Activated CD8-positive, alpha-beta memory T cell treated with anti-CD3 and anti-CD28 coated beads, Interleukin-2, amount 10 ng/mL, durations not matched to agents 7 days and 5 days (primary cell): ENCODE measurements at regions of chr6 and their contacts with region 1.

Region 1: DNA sequence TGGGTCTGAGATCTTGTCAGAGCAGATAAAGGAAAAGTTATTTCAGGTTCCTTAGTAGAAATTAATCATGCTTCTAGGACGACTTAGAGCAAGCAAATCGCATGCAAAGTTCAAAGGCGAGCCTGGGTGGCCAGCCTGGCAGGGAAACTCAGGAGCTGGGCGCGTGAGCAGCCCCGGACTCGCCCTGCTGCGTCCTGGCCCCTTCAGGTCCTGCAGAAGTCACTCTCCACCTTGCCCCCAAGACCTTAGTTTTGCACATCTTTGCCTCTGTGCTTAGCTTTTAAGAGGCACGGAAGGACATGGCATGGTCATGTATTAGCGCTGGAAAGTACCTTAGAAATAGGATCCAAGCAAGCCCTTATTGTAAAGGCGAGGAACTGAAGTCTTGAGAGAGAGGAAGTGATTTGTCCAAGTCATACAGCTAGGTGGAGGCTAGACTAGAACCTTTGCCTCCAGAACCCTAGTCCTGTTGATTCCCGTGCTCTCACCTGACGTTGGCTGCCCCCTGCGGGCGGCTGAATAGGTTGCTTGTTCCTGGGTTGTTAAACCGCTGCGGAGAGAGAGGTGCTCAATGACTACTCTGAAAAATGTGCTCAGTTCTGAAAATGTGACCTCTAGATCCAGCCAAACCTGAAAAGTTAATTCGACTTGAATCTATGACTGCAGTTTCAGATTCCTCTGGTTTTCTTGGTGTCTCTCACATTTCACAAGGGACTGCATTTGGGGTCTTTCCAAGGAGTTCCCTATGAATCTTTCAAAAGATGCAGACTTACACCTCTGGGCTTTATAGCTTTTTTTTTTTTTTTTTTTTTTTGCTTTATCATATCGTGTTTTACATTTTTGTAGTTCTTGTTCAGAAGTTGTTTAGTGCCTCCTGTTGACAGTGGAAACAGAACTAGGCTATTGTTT is 2.7 kb downstream of the MYB start:
- DNase-seq: peak; percentile 92
- ATAC-seq: peak; percentile 45
- H3K4me3 Mint-ChIP-seq: peak overlapping the region; percentile 97
- H3K27ac Mint-ChIP-seq: peak overlapping the region; percentile 92
- H3K4me1 Mint-ChIP-seq: peaks cover 32% of the 10 kb centered on the region
- H3K27me3 Mint-ChIP-seq: no peaks in the 10 kb centered on the region

Region 2: GRCh38 chr6:135075018-135075417 is 108.8 kb before region 1 on chr6:
- CTCF ChIA-PET with region 1: no interaction called
- DNase-seq: no peak
- ATAC-seq: no peak
- H3K4me3 Mint-ChIP-seq: no peak overlapping the region
- H3K27ac Mint-ChIP-seq: no peak overlapping the region
- H3K4me1 Mint-ChIP-seq: peaks cover 8% of the 10 kb centered on the region
- H3K27me3 Mint-ChIP-seq: no peaks in the 10 kb centered on the region

Region 3: GRCh38 chr6:135088818-135089809 is 94.7 kb before region 1 on chr6:
- CTCF ChIA-PET with region 1: interaction called, 12 read pairs
- DNase-seq: peak; percentile 79
- ATAC-seq: peak; percentile 87
- H3K4me3 Mint-ChIP-seq: peak overlapping the region; percentile 71
- H3K27ac Mint-ChIP-seq: peak overlapping the region; percentile 89
- H3K4me1 Mint-ChIP-seq: peaks cover 84% of the 10 kb centered on the region
- H3K27me3 Mint-ChIP-seq: no peaks in the 10 kb centered on the region

Region 4: DNA sequence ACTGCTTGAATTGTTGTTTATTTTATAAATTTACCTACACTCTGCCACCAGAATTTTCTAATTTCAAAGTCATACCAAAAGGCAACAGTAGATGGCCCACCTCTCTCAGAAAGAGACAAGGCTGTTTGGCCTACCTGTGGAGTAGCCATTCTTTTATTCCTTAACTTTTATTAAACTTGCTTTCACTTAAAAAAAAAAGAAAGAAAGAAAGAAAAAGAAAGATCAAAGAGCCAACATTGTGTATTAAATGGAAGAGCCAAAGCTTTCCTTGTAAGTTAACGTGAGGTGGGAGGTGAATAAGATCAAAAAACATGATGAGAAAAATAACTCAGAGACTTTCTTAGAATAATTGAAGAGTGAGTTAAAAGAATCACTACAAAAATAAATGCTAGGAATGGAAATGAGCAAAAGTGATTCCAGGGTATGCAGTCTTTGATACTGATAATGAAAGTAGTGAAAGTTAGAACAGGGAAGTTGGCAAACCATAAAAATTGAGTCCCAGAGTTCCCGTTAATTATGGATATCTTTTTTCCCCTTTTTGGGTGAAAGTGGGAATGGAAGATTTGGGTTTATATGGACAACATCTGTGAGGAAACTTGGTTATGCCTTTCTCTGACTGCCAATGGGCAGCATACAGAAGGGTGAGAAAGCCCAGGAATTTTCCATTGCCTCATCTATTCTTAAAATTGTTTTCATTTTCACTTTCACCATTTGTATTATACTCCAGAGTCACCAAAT is 38.6 kb before region 1 on chr6:
- CTCF ChIA-PET with region 1: interaction called, 68 read pairs
- DNase-seq: no peak
- ATAC-seq: peak; percentile 78
- H3K4me3 Mint-ChIP-seq: peak overlapping the region; percentile 62
- H3K27ac Mint-ChIP-seq: peak overlapping the region; percentile 88
- H3K4me1 Mint-ChIP-seq: peaks cover 65% of the 10 kb centered on the region
- H3K27me3 Mint-ChIP-seq: no peaks in the 10 kb centered on the region

Region 5: DNA sequence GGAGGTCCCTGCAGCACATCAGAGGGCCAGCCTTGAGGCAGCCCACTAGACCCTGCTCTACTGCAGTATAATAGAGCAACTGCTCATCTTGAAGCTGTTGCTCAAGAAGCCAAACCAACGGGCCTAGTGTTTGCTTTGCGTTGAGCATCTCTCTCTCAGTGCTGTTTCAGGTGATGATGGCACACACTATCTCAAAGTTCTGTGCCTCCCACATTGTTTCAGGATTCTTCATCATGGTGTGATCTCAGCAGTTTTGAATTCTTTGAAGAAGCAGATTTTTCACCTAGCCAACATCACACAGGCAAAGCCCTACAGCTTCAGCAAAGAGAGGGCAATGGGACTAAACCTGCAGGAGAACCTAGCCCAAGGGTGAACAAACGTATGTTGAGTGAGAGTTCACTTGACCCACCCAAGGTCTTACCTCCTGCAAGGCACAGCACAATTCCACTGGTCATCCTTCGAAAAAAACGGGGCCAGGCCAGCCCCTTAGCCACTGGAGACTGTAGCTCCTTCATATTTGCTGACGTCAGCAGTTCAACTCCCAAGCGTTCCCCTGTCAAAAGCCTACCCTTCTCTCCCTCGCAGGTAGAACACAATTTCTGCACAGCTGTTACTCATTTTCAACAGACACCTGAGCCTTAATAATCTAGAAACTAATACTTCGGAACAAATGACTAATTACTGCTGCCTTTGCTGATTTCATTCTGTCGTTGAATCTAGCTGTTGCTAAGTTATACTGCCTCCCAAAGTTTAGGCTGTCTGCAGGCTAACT is 13.1 kb after region 1 on chr6:
- CTCF ChIA-PET with region 1: interaction called, 12 read pairs
- DNase-seq: no peak
- ATAC-seq: peak; percentile 53
- H3K4me3 Mint-ChIP-seq: no peak overlapping the region
- H3K27ac Mint-ChIP-seq: peak overlapping the region; percentile 57
- H3K4me1 Mint-ChIP-seq: peaks cover 33% of the 10 kb centered on the region
- H3K27me3 Mint-ChIP-seq: no peaks in the 10 kb centered on the region

Region 6: GRCh38 chr6:135438907-135439535 is 255.2 kb after region 1 on chr6:
- CTCF ChIA-PET with region 1: no interaction called
- DNase-seq: no peak
- ATAC-seq: peak; percentile 67
- H3K4me3 Mint-ChIP-seq: no peak overlapping the region
- H3K27ac Mint-ChIP-seq: no peak overlapping the region
- H3K4me1 Mint-ChIP-seq: peaks cover 20% of the 10 kb centered on the region
- H3K27me3 Mint-ChIP-seq: no peaks in the 10 kb centered on the region